ENCODE measurements at regions of chr16 and their contacts with region 1.

Region 1: GRCh38 chr16:75464130-75464918 is at the start of gene TMEM170A:
- DNase-seq: peak; percentile 96
- ATAC-seq: peak; percentile 92
- H3K4me3 ChIP-seq: peak within 1 kb of the TSS; percentile 89
- H3K27ac ChIP-seq: peak within 1 kb of the TSS; percentile 64
- H3K4me1 ChIP-seq: peaks cover 17% of the 10 kb centered on the region; the same call in 1 of the 2 replicates
- H3K27me3 ChIP-seq: no peaks in the 10 kb centered on the region
- CTCF ChIP-seq: peak; percentile 98
- total RNA-seq, gene TMEM170A: 10.1 and 18.6 TPM in 2 replicates

Region 2: DNA sequence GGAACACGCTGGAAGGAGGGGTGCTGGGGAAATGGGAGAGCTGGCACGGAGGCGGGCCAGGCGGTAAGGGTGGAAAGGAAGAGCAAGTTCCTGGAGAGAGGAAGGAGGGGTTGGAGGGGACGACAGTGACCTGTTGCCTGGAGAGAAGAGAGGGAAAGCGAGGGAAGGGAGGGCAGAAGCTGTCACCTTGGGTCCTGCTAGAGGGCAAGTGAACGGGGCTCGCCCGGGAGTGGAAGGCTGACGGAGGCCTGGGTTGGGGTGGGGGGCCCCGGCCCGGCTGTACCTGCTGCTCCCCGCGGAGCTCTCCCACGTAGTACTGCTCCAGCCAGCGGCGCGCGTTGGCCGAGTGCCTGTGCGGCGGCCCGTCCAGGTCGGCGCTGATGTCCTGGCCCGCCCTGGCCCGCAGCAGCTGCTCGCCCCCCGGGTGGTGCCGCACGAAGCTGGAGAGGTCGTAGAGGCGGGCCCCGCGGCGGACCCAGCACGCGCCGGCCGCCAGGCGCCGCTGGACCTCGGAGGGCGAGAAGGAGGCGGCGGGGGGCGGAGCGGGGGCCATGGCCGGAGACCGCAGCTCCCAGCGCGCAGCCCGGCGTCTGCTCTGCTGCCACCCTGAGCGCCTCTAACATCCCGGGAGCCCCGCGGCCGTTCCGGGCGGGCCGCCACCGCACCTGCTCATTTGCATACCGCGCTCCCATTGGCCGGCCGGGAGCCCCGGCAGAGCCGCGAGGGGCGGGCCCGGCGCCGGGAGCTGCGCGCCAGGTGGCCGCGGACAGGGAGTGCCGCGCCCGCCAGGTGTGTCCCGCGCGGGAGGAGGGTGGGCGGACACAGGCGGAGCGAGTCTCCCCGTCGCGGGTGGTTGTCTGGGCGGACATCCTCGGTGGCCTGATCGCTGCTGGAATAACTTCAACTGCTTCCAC is 689.9 kb before region 1 on chr16 and contains the start of gene FA2H:
- CTCF ChIA-PET with region 1: no interaction called
- POLR2A ChIA-PET with region 1: no interaction called
- intact Hi-C with region 1: no loop called
- DNase-seq: peak; percentile 88
- ATAC-seq: peak; percentile 98
- H3K4me3 ChIP-seq: peak within 1 kb of the TSS; percentile 74
- H3K27ac ChIP-seq: peak within 1 kb of the TSS; percentile 14; the same call in 1 of the 2 replicates
- H3K4me1 ChIP-seq: peaks cover 7% of the 10 kb centered on the region; the same call in 1 of the 2 replicates
- H3K27me3 ChIP-seq: no peaks in the 10 kb centered on the region
- CTCF ChIP-seq: peak; percentile 35; the same call in 1 of the 2 replicates
- total RNA-seq, gene FA2H: 3.9 and 6.2 TPM in 2 replicates

Region 3: DNA sequence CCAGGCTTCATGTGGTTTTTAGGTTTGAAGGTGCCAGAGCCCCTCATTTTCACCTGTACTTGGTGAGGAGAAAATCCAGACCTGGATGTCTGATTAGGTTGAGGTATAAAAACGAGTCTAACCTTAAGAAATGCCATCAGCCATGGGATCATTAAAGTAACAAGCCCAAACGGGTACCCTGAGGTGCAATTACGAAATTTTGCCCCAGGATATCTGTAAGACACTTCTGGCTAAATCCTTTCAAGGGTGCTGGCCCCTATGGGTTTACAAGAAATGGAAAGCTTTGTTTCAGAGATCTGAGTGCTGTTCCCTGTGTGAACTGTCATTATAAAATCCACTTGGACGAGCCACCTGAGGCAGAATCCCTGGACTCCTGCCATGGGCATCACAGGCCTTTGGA is 138.9 kb after region 1 on chr16:
- CTCF ChIA-PET with region 1: no interaction called
- POLR2A ChIA-PET with region 1: interaction called, 13 read pairs
- intact Hi-C with region 1: no loop called
- DNase-seq: no peak
- ATAC-seq: no peak
- H3K4me3 ChIP-seq: no peak overlapping the region
- H3K27ac ChIP-seq: no peak overlapping the region
- H3K4me1 ChIP-seq: no peaks in the 10 kb centered on the region
- H3K27me3 ChIP-seq: no peaks in the 10 kb centered on the region
- CTCF ChIP-seq: no peak

Measured in PC-3 (cell line).